ENCODE measurements at regions of chr1 and their contacts with region 1.

Region 1: GRCh38 chr1:13228343-13228781 is 2.4 kb upstream of the PRAMEF18 start:
- DNase-seq: peak; percentile 56
- CTCF ChIP-seq: peak; percentile 79

Region 2: DNA sequence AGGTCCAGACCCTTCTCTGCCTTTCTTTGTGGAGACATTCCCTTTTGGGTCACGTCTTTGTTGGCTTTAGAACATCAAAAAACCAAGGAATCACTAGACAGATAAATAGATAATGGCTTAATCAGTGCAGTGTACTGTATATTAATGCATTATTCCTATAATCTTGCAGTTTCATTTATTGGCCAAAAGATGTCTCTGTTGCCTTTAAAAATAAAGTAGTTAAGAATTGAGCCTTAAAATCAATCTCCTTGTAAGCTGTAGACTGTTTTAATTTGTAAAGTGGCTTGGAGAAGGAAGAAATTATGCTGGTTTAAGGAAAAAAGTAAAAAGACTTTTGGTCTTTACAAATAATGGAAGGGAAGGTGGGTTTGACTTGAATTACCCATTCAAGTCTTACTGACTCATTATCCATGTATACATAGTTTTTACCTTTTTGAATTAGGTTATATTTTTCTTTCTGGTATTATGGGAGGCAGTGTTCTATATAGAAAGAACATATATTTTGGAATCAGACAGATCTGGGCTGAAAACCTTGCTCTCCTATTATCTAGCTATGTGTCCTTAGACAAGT is 913.9 kb before region 1 on chr1:
- in situ Hi-C with region 1: loop called (anchors 25 kb)
- DNase-seq: peak; percentile 32
- CTCF ChIP-seq: peak; percentile 52

Region 3: DNA sequence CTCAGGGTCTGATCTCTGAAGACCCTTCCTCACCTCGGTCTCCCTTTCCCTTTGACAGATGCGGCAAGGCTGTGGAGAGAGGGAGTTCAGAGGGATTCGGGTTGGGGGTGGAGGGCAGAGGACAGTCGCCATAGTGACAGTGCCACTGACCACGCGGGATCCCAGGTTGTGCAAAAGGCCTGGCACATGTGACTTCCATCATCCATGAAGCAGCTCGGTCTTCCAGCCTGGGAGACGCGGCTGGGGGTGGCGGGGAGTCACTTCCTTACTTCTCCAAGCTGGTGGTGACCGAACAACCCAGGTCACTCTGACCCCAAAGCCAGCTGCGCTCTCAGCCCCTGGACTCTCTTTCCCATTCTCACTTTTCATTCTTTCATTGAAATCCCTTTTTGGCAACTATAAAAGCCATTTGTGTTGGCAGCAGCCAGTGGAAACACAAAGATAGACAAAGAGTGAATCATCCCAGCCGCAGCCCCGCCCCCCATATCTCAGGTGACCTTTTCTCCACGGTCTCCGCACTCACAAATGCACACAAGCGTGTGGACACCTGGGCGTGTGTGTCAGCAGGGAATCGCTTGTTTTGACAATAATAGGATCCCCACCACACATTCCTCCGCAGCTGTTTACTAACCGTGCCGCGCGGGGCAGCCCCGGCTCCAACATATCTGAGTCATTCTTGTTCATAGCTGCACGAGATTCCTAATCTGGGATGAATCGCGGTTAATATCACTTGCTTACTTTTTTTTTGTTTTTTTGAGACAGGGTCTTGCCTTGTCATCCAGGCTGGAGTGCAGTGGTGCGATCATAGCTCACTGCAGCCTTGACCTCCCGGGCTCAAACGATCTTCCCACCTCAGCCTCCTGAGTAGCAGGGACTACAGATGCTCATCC is 678.7 kb before region 1 on chr1:
- in situ Hi-C with region 1: loop called (anchors 25 kb)
- DNase-seq: no peak
- CTCF ChIP-seq: no peak